AG04450 (cell line): ENCODE measurements at regions of chr1 and their contacts with region 1.

Region 1: GRCh38 chr1:209827384-209828262 is at the start of gene UTP25:
- DNase-seq: peak; percentile 95
- H3K4me3 ChIP-seq: peak within 1 kb of the TSS; percentile 71
- H3K27ac ChIP-seq: peak within 1 kb of the TSS; percentile 75
- H3K27me3 ChIP-seq: no peaks in the 10 kb centered on the region
- CTCF ChIP-seq: peak; percentile 84
- polyA plus RNA-seq, gene UTP25: 7.5 and 8.6 TPM in 2 replicates

Region 2: GRCh38 chr1:209784265-209785169 is 43.1 kb before region 1 on chr1 and contains the start of gene C1orf74:
- CTCF ChIA-PET with region 1: interaction called, 24 read pairs
- POLR2A ChIA-PET with region 1: interaction called, 4 read pairs
- DNase-seq: peak; percentile 95
- H3K4me3 ChIP-seq: peak within 1 kb of the TSS; percentile 86
- H3K27ac ChIP-seq: peak within 1 kb of the TSS; percentile 66
- H3K27me3 ChIP-seq: peaks cover 2% of the 10 kb centered on the region
- CTCF ChIP-seq: no peak
- polyA plus RNA-seq, gene C1orf74: 1.8 and 2.2 TPM in 2 replicates

Region 3: DNA sequence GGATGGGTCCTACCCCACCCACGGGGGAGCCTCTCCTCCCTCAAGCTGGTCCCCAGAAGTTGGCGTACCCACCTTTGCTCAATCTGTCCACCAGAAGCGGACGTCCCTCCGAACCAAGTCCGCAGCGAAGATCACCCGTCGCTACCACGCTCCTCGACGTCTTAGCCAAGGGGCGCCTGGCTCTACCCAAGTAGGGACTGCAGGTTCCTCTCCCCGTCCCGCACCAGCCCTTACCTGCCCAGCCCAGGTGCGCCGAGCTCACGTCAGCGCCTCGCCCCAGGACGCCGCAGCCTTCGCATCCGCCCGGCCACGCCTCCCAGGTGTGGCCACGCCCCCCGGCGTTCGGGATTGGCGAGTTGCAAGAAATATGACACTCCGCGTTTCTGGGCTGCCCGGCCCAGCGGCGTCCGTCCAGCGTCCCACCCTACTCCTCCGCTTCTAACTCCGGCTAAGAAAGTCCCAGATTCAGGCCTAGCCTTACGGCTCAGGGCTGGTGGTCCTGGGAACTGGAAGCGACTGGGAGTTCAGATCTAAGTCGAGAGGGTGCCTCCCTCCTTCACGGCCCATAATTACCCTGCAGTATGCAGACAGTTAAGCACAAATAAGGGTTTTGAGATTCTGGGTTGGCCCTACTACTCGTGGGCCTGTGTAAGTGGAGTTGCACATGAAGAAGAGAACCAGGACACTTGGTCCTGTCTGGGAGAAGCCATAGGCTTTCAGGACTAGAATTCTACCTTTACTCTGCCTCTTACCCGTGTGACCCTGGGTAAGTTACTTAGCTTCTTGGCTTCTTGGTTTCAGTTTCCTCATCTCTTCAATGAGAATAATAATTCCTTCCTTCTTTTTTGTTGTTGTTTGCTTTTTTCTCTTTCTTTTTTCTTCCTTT is 21.5 kb before region 1 on chr1 and contains the start of gene IRF6:
- CTCF ChIA-PET with region 1: interaction called, 85 read pairs
- POLR2A ChIA-PET with region 1: interaction called, 11 read pairs
- DNase-seq: no peak
- H3K4me3 ChIP-seq: peak within 1 kb of the TSS; percentile 54
- H3K27ac ChIP-seq: no peak within 1 kb of the TSS
- H3K27me3 ChIP-seq: no peaks in the 10 kb centered on the region
- CTCF ChIP-seq: no peak
- polyA plus RNA-seq, gene IRF6: 0.67 and 1.0 TPM in 2 replicates

Region 4: DNA sequence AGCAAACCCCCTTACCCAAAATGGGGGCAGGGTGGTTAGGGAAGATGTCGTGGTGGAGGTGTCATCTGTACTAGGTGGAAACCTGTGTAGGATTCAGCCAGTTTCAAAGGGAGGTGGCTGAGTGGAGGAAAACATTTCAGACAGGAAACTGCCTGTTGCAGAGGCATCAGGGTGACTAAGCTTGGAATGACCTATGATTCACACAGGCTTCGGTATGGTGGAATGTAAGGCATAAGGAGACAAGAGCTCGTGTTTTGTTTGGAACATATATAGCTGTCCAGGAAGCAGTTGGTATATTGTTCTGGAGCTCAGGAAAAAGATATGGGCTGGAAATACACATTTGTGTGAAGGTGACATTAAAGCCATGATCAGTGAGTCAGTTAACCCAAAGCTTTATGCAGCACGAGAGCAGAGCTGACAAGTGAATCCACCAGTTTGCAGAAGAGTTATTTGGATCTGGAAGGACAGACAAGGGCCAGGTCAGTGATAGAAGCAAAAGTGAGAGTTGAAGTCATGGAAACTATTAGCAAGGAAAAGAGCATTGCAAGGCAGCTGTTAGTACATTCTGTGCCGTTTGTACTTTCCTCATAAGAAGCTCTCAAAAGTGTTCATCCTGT is 12.4 kb after region 1 on chr1:
- CTCF ChIA-PET with region 1: interaction called, 158 read pairs
- POLR2A ChIA-PET with region 1: interaction called, 6 read pairs
- DNase-seq: peak; percentile 88
- H3K4me3 ChIP-seq: peak overlapping the region; percentile 22
- H3K27ac ChIP-seq: peak overlapping the region; percentile 96
- H3K27me3 ChIP-seq: no peaks in the 10 kb centered on the region
- CTCF ChIP-seq: no peak

Region 5: GRCh38 chr1:209860293-209860881 is 32.8 kb after region 1 on chr1:
- CTCF ChIA-PET with region 1: interaction called, 24 read pairs
- POLR2A ChIA-PET with region 1: no interaction called
- DNase-seq: no peak
- H3K4me3 ChIP-seq: no peak overlapping the region
- H3K27ac ChIP-seq: no peak overlapping the region
- H3K27me3 ChIP-seq: no peaks in the 10 kb centered on the region
- CTCF ChIP-seq: peak; percentile 93